ENCODE measurements at regions of chr19 and their contacts with region 1.

Region 1: DNA sequence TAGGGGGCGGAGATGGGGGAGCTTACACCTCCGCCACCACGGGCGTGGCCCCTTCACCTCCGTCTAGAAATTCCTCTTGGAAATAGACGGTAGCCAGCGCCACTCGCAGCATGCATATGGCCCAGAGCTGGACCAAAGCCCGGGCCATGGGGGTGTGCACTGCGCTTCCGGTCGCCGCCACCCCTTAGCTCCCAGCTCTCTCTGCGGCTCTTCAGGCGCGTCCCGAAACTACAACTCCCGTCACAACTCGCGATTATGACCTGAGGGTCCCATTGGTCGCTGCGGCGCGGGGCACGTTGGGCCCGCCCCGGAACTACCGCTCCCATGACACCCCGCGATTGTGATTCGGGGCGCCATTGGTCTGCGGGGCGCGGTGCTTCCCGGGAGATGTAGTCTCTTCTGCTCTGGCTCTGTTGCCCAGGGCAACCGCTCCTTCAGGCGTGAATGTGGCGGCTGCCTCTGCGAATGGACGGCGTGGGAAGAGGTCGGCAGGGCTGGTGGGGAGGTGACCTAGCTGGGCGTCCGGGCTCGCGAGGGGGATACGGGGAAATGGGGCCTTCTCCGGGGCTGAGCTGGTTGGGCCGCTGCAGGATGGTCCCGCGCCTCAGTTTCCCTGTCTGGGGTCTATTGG is at the starts of genes C19orf44 and CALR3:
- DNase-seq: peak; percentile 100
- H3K4me3 ChIP-seq: peak within 1 kb of the TSS; percentile 74
- H3K27ac ChIP-seq: peak within 1 kb of the TSS; percentile 69
- H3K4me1 ChIP-seq: peaks cover 5% of the 10 kb centered on the region
- H3K27me3 ChIP-seq: no peaks in the 10 kb centered on the region
- CTCF ChIP-seq: no peak
- total RNA-seq, gene C19orf44: 8.3 and 9.8 TPM in 2 replicates
- total RNA-seq, gene CALR3: not detected in 2 replicates

Region 2: GRCh38 chr19:16404396-16405097 is 91.5 kb before region 1 on chr19:
- CTCF ChIA-PET with region 1: no interaction called
- POLR2A ChIA-PET with region 1: interaction called, 15 read pairs
- intact Hi-C with region 1: no loop called
- DNase-seq: no peak
- H3K4me3 ChIP-seq: no peak overlapping the region
- H3K27ac ChIP-seq: no peak overlapping the region
- H3K4me1 ChIP-seq: peaks cover 3% of the 10 kb centered on the region
- H3K27me3 ChIP-seq: no peaks in the 10 kb centered on the region
- CTCF ChIP-seq: no peak

Region 3: DNA sequence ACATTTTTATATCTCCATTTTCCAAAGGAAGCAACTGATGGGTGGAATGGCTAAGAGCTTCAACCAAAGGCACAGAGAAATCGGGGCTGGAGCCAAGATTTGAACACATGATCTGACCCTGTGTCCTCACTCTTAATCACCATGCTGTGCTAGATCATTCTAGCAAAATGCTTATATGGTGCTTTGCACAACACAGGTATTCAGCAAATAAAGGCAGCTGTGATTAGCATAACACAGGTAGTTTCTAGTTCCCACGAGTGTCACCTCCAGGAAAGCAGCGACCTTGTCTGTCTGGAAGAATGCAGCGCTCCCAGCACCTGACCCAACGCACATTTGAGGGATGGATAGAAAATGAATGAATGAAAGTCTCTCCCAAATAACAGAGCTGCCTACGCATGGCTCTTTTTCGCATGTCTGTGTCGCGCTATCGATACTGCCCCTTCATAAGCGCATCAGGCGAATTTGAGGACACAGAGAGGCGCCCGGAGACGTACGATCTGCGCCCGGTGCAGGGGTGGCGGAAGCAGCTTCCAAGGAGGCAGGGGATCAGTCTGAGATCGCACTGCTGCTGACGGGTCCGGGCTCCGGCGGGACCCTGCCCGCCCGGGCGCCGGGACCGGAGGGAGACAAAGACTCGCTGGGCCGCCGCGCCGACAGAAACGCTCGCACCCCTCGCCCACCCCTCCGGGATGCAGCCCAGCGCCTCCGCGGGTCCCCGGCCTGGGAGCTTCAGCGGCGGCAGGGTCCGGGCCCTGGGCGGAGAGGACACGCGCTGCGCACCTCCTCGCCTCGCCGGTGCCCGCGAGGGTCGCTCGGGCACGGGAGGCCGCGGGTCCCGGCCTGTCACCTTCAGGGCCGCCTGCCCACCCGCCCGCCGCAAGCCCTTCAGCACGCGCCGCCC is 24.9 kb before region 1 on chr19:
- CTCF ChIA-PET with region 1: no interaction called
- POLR2A ChIA-PET with region 1: no interaction called
- intact Hi-C with region 1: no loop called
- DNase-seq: peak; percentile 43
- H3K4me3 ChIP-seq: peak overlapping the region; percentile 75
- H3K27ac ChIP-seq: peak overlapping the region; percentile 73
- H3K4me1 ChIP-seq: peaks cover 12% of the 10 kb centered on the region
- H3K27me3 ChIP-seq: no peaks in the 10 kb centered on the region
- CTCF ChIP-seq: no peak

Region 4: GRCh38 chr19:16572332-16573211 is 76.5 kb after region 1 on chr19 and contains the start of gene SLC35E1:
- CTCF ChIA-PET with region 1: no interaction called
- POLR2A ChIA-PET with region 1: no interaction called
- intact Hi-C with region 1: no loop called
- DNase-seq: peak; percentile 97
- H3K4me3 ChIP-seq: peak within 1 kb of the TSS; percentile 86
- H3K27ac ChIP-seq: peak within 1 kb of the TSS; percentile 71
- H3K4me1 ChIP-seq: peaks cover 10% of the 10 kb centered on the region
- H3K27me3 ChIP-seq: no peaks in the 10 kb centered on the region
- CTCF ChIP-seq: no peak
- total RNA-seq, gene SLC35E1: 36.3 and 37.9 TPM in 2 replicates